PC-9 (cell line): ENCODE measurements at regions of chr3 and their contacts with region 1.

Region 1: DNA sequence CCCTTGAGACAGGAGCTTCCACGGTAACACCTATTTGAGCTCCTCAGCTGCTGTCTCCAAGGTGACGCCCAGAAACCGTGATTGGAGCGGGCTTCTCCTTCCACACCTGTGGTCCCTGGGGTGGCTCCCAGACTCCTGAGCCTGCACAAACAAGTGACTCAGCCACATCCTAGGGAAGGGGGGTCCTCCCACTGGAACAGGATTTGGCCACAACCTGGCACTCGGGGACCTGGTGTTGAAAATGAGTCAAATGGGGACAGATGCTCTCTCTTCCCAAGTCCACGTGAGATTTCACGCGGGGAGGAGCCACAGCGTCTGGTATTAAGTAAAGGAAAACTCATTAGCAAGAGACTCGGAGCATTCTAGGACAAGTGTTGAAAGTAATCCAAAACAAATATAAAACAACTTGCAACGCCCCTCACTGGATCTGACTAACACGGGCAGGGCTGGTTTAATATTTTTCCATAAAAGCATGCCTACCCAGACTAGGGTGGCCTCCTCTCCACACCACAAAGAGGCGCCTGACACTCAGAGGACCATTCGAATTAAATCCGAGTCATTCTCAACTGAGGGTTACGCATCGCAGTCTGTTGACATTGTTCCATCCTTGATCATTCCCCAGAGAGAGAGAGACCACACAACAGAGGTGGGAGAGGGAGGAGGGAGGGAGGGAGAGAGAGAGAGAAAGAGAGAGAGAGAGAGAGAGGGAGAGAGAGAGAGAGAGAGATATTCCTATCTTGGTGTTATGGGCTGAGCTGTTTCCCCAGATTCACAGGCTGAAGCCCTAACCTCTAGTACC is 74.4 kb downstream of the MGLL start:
- DNase-seq: peak; percentile 95 to 97
- H3K4me3 ChIP-seq: 0 out of 2 replicates have a peak overlapping the region, but pooled peaks have one; percentile 6
- H3K27ac ChIP-seq: peak overlapping the region; percentile 91
- H3K4me1 ChIP-seq: peaks cover 73% of the 10 kb centered on the region
- H3K27me3 ChIP-seq: no peaks in the 10 kb centered on the region
- CTCF ChIP-seq: peak; percentile 69

Region 2: GRCh38 chr3:127264292-127264691 is 483.6 kb before region 1 on chr3:
- CTCF ChIA-PET with region 1: no interaction called
- POLR2A ChIA-PET with region 1: no interaction called
- intact Hi-C with region 1: no loop called
- DNase-seq: no peak
- H3K4me3 ChIP-seq: no peak overlapping the region
- H3K27ac ChIP-seq: no peak overlapping the region
- H3K4me1 ChIP-seq: no peaks in the 10 kb centered on the region
- H3K27me3 ChIP-seq: peaks cover 8% of the 10 kb centered on the region
- CTCF ChIP-seq: no peak

Region 3: GRCh38 chr3:127672516-127673190 is 75.3 kb before region 1 on chr3 and contains the start of gene ABTB1:
- CTCF ChIA-PET with region 1: no interaction called
- POLR2A ChIA-PET with region 1: interaction called, 4 read pairs
- intact Hi-C with region 1: loop called (anchors 5 kb)
- DNase-seq: peak; percentile 54 to 79
- H3K4me3 ChIP-seq: peak within 1 kb of the TSS; percentile 85
- H3K27ac ChIP-seq: peak within 1 kb of the TSS; percentile 56
- H3K4me1 ChIP-seq: peaks cover 7% of the 10 kb centered on the region; the same call in 1 of the 2 replicates
- H3K27me3 ChIP-seq: no peaks in the 10 kb centered on the region
- CTCF ChIP-seq: no peak
- total RNA-seq, gene ABTB1: 39.1 and 57.1 TPM in 2 replicates

Region 4: GRCh38 chr3:127735767-127736704 is 11.9 kb before region 1 on chr3:
- CTCF ChIA-PET with region 1: no interaction called
- POLR2A ChIA-PET with region 1: interaction called, 12 read pairs
- intact Hi-C with region 1: loop called (anchors 1 kb)
- DNase-seq: peak in 1 of 2 experiments; percentile 36
- H3K4me3 ChIP-seq: no peak overlapping the region
- H3K27ac ChIP-seq: no peak overlapping the region
- H3K4me1 ChIP-seq: peaks cover 10% of the 10 kb centered on the region
- H3K27me3 ChIP-seq: no peaks in the 10 kb centered on the region
- CTCF ChIP-seq: no peak

Region 5: GRCh38 chr3:127791211-127791946 is 43.5 kb after region 1 on chr3:
- CTCF ChIA-PET with region 1: interaction called, 3 read pairs
- POLR2A ChIA-PET with region 1: no interaction called
- intact Hi-C with region 1: loop called (anchors 1 kb)
- DNase-seq: peak; percentile 65 to 84
- H3K4me3 ChIP-seq: no peak overlapping the region
- H3K27ac ChIP-seq: peak overlapping the region; percentile 54
- H3K4me1 ChIP-seq: peaks cover 30% of the 10 kb centered on the region
- H3K27me3 ChIP-seq: no peaks in the 10 kb centered on the region
- CTCF ChIP-seq: peak; percentile 46; the same call in 1 of the 2 replicates

Region 6: GRCh38 chr3:127889461-127889863 is 141.5 kb after region 1 on chr3:
- CTCF ChIA-PET with region 1: no interaction called
- POLR2A ChIA-PET with region 1: no interaction called
- intact Hi-C with region 1: loop called (anchors 1 kb)
- DNase-seq: no peak
- H3K4me3 ChIP-seq: no peak overlapping the region
- H3K27ac ChIP-seq: no peak overlapping the region; the same call in 1 of the 2 replicates
- H3K4me1 ChIP-seq: 0 out of 2 replicates have a peak, but pooled peaks cover 5% of the 10 kb centered on the region
- H3K27me3 ChIP-seq: no peaks in the 10 kb centered on the region
- CTCF ChIP-seq: no peak